B cell (primary cell): ENCODE measurements at regions of chr22 and their contacts with region 1.

Region 1: DNA sequence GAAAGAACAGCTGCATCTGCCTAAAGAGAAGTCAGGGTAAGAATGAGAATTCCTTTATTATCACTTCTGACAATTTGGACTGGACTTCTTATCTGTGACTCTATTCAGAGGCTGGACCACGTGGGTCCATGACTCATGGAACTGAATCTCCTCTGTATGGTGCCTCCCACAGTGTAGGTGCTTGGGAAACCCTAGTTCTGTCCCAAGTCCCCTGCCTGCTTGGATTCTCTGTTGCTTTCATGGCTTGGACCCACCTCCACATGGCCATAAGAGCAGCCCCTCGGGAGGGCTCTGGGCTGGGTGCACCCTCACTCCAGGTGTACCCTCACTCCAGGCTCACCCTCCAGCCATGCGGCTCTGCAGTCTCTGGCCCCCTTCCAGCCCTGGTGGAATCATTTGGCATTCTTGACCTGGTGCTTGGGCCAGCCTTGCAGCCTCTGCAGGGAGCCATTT is 153.4 kb downstream of the CACNA1I start:
- DNase-seq: no peak
- ATAC-seq: no peak
- H3K4me3 ChIP-seq: no peak overlapping the region
- H3K4me3 Mint-ChIP-seq: no peak overlapping the region
- H3K27ac ChIP-seq: no peak overlapping the region
- H3K27ac Mint-ChIP-seq: no peak overlapping the region
- H3K4me1 ChIP-seq: no peaks in the 10 kb centered on the region
- H3K4me1 Mint-ChIP-seq: no peaks in the 10 kb centered on the region
- H3K27me3 ChIP-seq: peaks cover 0 to 8% (median 0%) of the 10 kb centered on the region in 4 experiments
- H3K27me3 Mint-ChIP-seq: peaks cover 27% of the 10 kb centered on the region
- CTCF ChIP-seq: no peak

Region 2: DNA sequence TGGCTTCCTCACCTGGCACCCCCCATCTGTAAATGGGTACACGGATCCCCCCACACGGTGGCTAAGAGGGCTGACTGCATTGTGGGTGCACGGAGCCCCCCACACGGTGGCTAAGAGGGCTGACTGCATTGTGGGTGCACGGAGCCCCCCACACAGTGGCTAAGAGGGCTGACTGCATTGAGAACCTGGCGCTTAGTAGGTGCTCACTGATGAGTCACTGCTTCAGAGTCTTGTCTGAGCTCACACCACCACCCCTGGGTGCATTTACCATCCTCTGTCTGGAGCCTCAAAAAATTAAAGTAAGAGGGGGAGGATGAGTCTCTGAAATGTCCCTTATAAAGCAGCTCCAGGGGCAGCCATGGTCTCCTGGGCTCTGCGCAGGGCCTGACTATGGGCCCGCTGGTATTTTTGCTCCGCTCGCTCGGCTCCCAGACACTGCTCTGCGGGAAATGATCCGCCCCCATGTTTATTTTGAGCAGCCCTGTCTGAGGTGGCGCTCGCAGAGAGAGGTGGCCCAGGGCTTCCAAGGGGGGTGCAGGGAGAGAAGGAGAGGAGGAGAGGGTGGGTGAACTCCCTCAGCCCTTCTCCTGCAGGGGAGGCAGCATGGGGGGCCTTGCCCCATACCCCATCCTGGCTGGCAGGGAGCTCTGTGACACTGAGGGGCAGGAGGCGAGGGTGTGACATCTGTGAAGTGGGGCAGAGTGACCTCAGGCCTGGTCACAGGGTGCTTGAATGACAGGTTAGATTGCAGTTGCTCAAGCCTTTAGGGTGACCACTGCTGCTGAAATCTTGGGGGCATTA is 70.7 kb before region 1 on chr22:
- CTCF ChIA-PET with region 1: no interaction called
- POLR2A ChIA-PET with region 1: no interaction called
- intact Hi-C with region 1: loop called (anchors 2 kb)
- DNase-seq: no peak
- ATAC-seq: no peak
- H3K4me3 ChIP-seq: no peak overlapping the region
- H3K4me3 Mint-ChIP-seq: no peak overlapping the region
- H3K27ac ChIP-seq: no peak overlapping the region
- H3K27ac Mint-ChIP-seq: no peak overlapping the region
- H3K4me1 ChIP-seq: no peaks in the 10 kb centered on the region
- H3K4me1 Mint-ChIP-seq: no peaks in the 10 kb centered on the region
- H3K27me3 ChIP-seq: peaks cover 0 to 23% (median 0%) of the 10 kb centered on the region in 4 experiments
- H3K27me3 Mint-ChIP-seq: peaks cover 24% of the 10 kb centered on the region
- CTCF ChIP-seq: no peak